ENCODE measurements at regions of chr10 and their contacts with region 1.

Region 1: DNA sequence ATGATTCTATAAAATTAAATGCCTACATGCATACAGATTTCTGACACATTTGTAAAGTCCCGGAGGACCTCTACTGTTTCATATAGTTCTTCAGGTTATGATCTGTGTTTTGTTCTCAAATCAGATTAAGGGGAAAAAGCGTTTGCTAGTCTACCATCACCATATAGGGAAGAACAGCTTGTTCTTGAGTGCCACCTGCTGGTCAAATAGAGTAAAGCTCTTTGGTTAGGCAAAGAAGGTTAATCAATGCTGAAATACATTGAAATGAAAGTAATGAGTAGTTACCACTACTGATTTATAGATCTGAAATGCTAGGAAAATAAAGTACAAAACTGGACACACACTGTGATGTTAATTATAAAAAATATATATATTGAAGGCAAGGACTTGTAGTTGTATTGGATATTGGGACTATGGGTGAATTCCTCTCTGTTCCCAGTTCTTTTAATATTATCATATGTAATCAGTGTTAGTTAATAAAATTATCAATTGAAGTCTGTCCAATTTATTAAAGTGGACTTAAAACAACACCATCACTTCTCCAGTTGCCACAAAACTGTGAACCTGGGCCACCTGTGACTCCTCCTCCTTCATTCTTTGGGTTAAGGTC is 72.6 kb upstream of the PDLIM1 start:
- DNase-seq: peak; percentile 32 to 67 (median 53)
- H3K4me3 ChIP-seq: no peak overlapping the region
- H3K4me3 Mint-ChIP-seq: no peak overlapping the region
- H3K27ac ChIP-seq: no peak overlapping the region
- H3K27ac Mint-ChIP-seq: no peak overlapping the region
- H3K4me1 ChIP-seq: no peaks in the 10 kb centered on the region
- H3K4me1 Mint-ChIP-seq: no peaks in the 10 kb centered on the region
- H3K27me3 ChIP-seq: no peaks in the 10 kb centered on the region
- H3K27me3 Mint-ChIP-seq: peaks cover 2 to 9% (median 4%) of the 10 kb centered on the region in 3 donors
- CTCF ChIP-seq: peak; percentile 94

Region 2: DNA sequence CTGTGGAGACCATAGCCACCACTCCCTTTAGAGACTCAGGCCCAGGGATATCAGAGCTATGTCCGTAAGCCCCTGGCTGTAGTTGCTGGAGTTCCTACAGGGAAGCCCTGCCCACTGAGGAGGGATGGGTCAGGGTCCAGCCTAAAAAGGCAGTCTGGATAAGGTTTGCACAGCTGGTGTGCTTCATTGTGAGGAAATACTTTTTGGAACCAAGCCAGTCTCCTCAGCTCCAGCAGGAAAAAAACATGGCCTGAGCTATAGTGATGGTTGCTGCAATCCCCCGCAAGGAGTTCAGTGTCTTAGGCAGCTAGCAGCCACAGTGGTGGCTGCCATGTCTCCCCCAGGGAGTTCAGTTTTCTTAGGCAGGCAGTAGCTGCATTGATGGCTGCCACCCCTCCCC is 241.5 kb before region 1 on chr10:
- intact Hi-C with region 1: no loop called
- DNase-seq: no peak
- H3K4me3 ChIP-seq: no peak overlapping the region
- H3K4me3 Mint-ChIP-seq: no peak overlapping the region
- H3K27ac ChIP-seq: no peak overlapping the region
- H3K27ac Mint-ChIP-seq: no peak overlapping the region
- H3K4me1 ChIP-seq: no peaks in the 10 kb centered on the region
- H3K4me1 Mint-ChIP-seq: peaks cover 7% of the 10 kb centered on the region
- H3K27me3 ChIP-seq: no peaks in the 10 kb centered on the region
- H3K27me3 Mint-ChIP-seq: no peaks in the 10 kb centered on the region
- CTCF ChIP-seq: no peak

Region 3: GRCh38 chr10:95133016-95133752 is 230.2 kb before region 1 on chr10:
- intact Hi-C with region 1: loop called (anchors 5 kb)
- DNase-seq: peak; percentile 38 to 64 (median 46)
- H3K4me3 ChIP-seq: no peak overlapping the region
- H3K4me3 Mint-ChIP-seq: no peak overlapping the region
- H3K27ac ChIP-seq: no peak overlapping the region
- H3K27ac Mint-ChIP-seq: no peak overlapping the region
- H3K4me1 ChIP-seq: no peaks in the 10 kb centered on the region
- H3K4me1 Mint-ChIP-seq: no peaks in the 10 kb centered on the region
- H3K27me3 ChIP-seq: no peaks in the 10 kb centered on the region
- H3K27me3 Mint-ChIP-seq: peaks cover 0 to 3% (median 2%) of the 10 kb centered on the region in 3 donors
- CTCF ChIP-seq: peak; percentile 82

Region 4: DNA sequence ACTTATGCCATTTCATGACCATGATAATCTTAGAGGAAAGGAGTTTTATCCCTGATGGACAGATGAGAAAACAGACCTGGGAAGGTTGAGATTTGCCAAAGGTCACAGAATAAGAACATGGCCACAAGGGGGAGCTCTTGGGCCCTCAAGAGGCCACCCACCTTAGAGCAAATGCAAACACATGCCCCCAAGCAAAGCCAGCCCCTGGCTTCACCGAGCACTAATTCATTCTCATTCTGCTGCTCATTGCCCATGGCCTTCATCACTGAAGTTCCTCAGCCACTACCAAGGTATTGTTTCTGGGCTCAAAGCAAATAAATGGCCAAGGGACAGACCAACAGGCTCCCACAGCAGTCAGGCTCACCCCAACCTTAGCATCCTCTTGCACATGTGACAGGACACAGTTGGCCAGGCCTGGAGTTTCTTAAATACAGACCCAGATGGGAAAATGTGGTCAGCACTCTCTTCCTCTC is 116.8 kb before region 1 on chr10:
- intact Hi-C with region 1: loop called (anchors 1 to 5 kb)
- DNase-seq: peak; percentile 37 to 55 (median 38)
- H3K4me3 ChIP-seq: no peak overlapping the region
- H3K4me3 Mint-ChIP-seq: no peak overlapping the region
- H3K27ac ChIP-seq: no peak overlapping the region
- H3K27ac Mint-ChIP-seq: no peak overlapping the region
- H3K4me1 ChIP-seq: no peaks in the 10 kb centered on the region
- H3K4me1 Mint-ChIP-seq: peaks cover 4% of the 10 kb centered on the region
- H3K27me3 ChIP-seq: no peaks in the 10 kb centered on the region
- H3K27me3 Mint-ChIP-seq: peaks cover 0 to 7% (median 0%) of the 10 kb centered on the region in 3 donors
- CTCF ChIP-seq: peak; percentile 88